CD4-positive, alpha-beta memory T cell (primary cell): ENCODE measurements at regions of chr3 and their contacts with region 1.

Region 1: DNA sequence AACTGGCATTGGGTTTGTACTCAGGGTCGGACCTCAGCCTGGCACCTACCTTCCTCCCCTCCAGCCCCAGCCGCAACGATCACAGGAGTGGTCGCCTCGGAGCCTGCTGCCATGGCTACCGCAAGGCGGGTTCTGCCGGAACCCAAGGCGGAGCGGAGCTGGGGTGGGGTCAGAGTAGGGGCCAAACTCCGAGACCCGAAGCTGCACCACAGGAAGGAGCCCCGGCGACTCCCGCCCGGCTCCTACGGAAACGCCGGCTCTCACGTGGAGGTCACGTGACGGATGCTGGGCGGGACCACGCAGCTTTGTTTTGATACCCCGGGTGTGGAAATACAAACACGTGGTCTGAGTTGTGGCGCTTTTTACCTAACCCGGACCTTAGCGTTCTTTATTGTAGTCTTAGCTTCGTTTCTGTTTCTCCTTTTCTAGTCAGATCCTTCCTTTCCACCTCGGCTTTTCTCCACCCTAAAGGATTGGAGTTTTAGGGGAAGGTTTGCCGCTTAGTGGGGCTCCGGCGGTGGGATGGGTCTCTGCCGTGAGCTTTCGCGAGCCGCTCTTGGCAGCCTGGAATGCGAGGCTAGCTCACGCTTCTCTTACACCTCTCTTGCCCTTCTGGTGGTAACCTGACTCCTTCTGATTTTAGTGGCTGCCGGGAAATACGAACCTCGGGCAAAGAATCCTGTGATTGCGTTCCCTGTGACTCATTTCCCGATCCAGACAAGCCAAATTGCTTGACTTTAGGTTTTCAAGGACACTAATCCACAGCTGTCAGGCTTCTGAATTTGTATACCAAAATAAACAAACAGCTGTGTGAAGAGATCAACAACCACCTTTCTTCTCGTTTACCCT is at the start of gene HSPBAP1:
- DNase-seq: peak; percentile 85 to 91 (median 87)
- H3K4me3 ChIP-seq: peak within 1 kb of the TSS; percentile 78 to 83
- H3K4me3 Mint-ChIP-seq: peak within 1 kb of the TSS in 6 of 8 donors; percentile 91 to 97 (median 94)
- H3K27ac ChIP-seq: peak within 1 kb of the TSS; percentile 74
- H3K27ac Mint-ChIP-seq: peak within 1 kb of the TSS in 5 of 7 donors; percentile 95 to 98 (median 97)
- H3K4me1 ChIP-seq: peaks cover 54% of the 10 kb centered on the region
- H3K4me1 Mint-ChIP-seq: peaks cover 25 to 32% (median 29%) of the 10 kb centered on the region in 4 donors
- H3K27me3 ChIP-seq: no peaks in the 10 kb centered on the region
- H3K27me3 Mint-ChIP-seq: no peaks in the 10 kb centered on the region
- total RNA-seq, gene HSPBAP1: 22.9 to 23.2 TPM

Region 2: GRCh38 chr3:121834696-121835464 is 958.9 kb before region 1 on chr3 and contains the starts of genes EAF2 and IQCB1:
- CTCF ChIA-PET with region 1: no interaction called
- POLR2A ChIA-PET with region 1: no interaction called
- intact Hi-C with region 1: loop called (anchors 10 kb)
- DNase-seq: peak; percentile 97 to 98 (median 97)
- H3K4me3 ChIP-seq: peak within 1 kb of the TSS; percentile 83 to 96
- H3K4me3 Mint-ChIP-seq: peak within 1 kb of the TSS; percentile 92 to 98 (median 94)
- H3K27ac ChIP-seq: peak within 1 kb of the TSS; percentile 84
- H3K27ac Mint-ChIP-seq: peak within 1 kb of the TSS; percentile 77 to 98 (median 94)
- H3K4me1 ChIP-seq: peaks cover 30% of the 10 kb centered on the region
- H3K4me1 Mint-ChIP-seq: peaks cover 32 to 54% (median 44%) of the 10 kb centered on the region in 4 donors
- H3K27me3 ChIP-seq: no peaks in the 10 kb centered on the region
- H3K27me3 Mint-ChIP-seq: no peaks in the 10 kb centered on the region
- total RNA-seq, gene EAF2: 5.7 to 6.3 TPM
- total RNA-seq, gene IQCB1: 37.9 to 38.2 TPM

Region 3: DNA sequence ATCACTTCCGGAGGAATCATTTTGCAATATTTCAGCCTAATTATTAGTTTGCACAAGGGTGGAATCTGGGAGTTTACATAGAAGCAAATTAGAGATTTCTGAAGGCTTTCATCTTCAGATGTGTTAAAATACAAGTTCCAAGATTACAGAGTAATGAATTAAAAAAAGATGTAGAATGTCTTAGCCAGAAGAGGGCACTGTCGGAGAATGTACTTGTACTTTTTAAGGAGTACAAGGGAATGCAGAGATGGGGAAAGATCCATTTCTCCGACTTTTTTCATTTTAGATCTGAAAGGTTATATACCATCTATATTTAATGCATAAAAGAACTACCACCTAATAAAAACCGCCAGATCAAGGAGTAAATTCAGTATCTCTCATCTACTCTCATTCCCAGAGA is 334.8 kb before region 1 on chr3:
- CTCF ChIA-PET with region 1: no interaction called
- POLR2A ChIA-PET with region 1: no interaction called
- intact Hi-C with region 1: no loop called
- DNase-seq: no peak
- H3K4me3 ChIP-seq: no peak overlapping the region
- H3K4me3 Mint-ChIP-seq: no peak overlapping the region
- H3K27ac ChIP-seq: no peak overlapping the region
- H3K27ac Mint-ChIP-seq: peak overlapping the region in 3 of 7 donors; percentile 43 to 70 (median 55)
- H3K4me1 ChIP-seq: no peaks in the 10 kb centered on the region
- H3K4me1 Mint-ChIP-seq: peaks cover 0 to 6% (median 1%) of the 10 kb centered on the region in 4 donors
- H3K27me3 ChIP-seq: no peaks in the 10 kb centered on the region
- H3K27me3 Mint-ChIP-seq: no peaks in the 10 kb centered on the region

Region 4: GRCh38 chr3:122514123-122515019 is 279.4 kb before region 1 on chr3 and contains the start of gene KPNA1:
- CTCF ChIA-PET with region 1: no interaction called
- POLR2A ChIA-PET with region 1: interaction called, 3 read pairs
- intact Hi-C with region 1: loop called (anchors 1 kb)
- DNase-seq: peak; percentile 86 to 92 (median 90)
- H3K4me3 ChIP-seq: peak within 1 kb of the TSS; percentile 58 to 71
- H3K4me3 Mint-ChIP-seq: peak within 1 kb of the TSS; percentile 90 to 95 (median 93)
- H3K27ac ChIP-seq: peak within 1 kb of the TSS; percentile 97
- H3K27ac Mint-ChIP-seq: peak within 1 kb of the TSS; percentile 91 to 98 (median 96)
- H3K4me1 ChIP-seq: peaks cover 30% of the 10 kb centered on the region
- H3K4me1 Mint-ChIP-seq: peaks cover 24 to 51% (median 36%) of the 10 kb centered on the region in 4 donors
- H3K27me3 ChIP-seq: no peaks in the 10 kb centered on the region
- H3K27me3 Mint-ChIP-seq: no peaks in the 10 kb centered on the region
- total RNA-seq, gene KPNA1: 67.4 to 71.5 TPM

Region 5: GRCh38 chr3:122564155-122564912 is 229.5 kb before region 1 on chr3 and contains the starts of genes DTX3L and PARP9:
- CTCF ChIA-PET with region 1: no interaction called
- POLR2A ChIA-PET with region 1: interaction called, 6 read pairs
- intact Hi-C with region 1: loop called (anchors 1 kb)
- DNase-seq: peak; percentile 79 to 87 (median 81)
- H3K4me3 ChIP-seq: peak within 1 kb of the TSS; percentile 78 to 94
- H3K4me3 Mint-ChIP-seq: peak within 1 kb of the TSS; percentile 92 to 98 (median 96)
- H3K27ac ChIP-seq: peak within 1 kb of the TSS; percentile 95
- H3K27ac Mint-ChIP-seq: peak within 1 kb of the TSS; percentile 90 to 99 (median 97)
- H3K4me1 ChIP-seq: peaks cover 70% of the 10 kb centered on the region
- H3K4me1 Mint-ChIP-seq: peaks cover 55 to 85% (median 70%) of the 10 kb centered on the region in 4 donors
- H3K27me3 ChIP-seq: no peaks in the 10 kb centered on the region
- H3K27me3 Mint-ChIP-seq: no peaks in the 10 kb centered on the region
- total RNA-seq, gene DTX3L: 49.3 to 51.0 TPM
- total RNA-seq, gene PARP9: 24.0 to 26.0 TPM

Region 6: GRCh38 chr3:123201566-123202427 is 408.0 kb after region 1 on chr3 and contains the start of gene SEC22A:
- CTCF ChIA-PET with region 1: no interaction called
- POLR2A ChIA-PET with region 1: interaction called, 10 read pairs
- intact Hi-C with region 1: loop called (anchors 1 kb)
- DNase-seq: peak; percentile 95 to 98 (median 98)
- H3K4me3 ChIP-seq: peak within 1 kb of the TSS; percentile 82 to 91
- H3K4me3 Mint-ChIP-seq: peak within 1 kb of the TSS; percentile 88 to 98 (median 90)
- H3K27ac ChIP-seq: peak within 1 kb of the TSS; percentile 98
- H3K27ac Mint-ChIP-seq: peak within 1 kb of the TSS; percentile 92 to 99 (median 98)
- H3K4me1 ChIP-seq: peaks cover 20% of the 10 kb centered on the region
- H3K4me1 Mint-ChIP-seq: peaks cover 21 to 38% (median 28%) of the 10 kb centered on the region in 4 donors
- H3K27me3 ChIP-seq: no peaks in the 10 kb centered on the region
- H3K27me3 Mint-ChIP-seq: peaks cover 0 to 4% of the 10 kb centered on the region in 2 donors
- total RNA-seq, gene SEC22A: 19.4 to 23.2 TPM